ENCODE measurements at regions of chr13 and their contacts with region 1.

Region 1: GRCh38 chr13:77480066-77480465 is 55.4 kb upstream of the SCEL start:
- DNase-seq: no peak
- ATAC-seq: no peak
- H3K4me3 ChIP-seq: no peak overlapping the region
- H3K27ac ChIP-seq: no peak overlapping the region
- H3K4me1 ChIP-seq: peaks cover 0 to 7% of the 10 kb centered on the region in 2 experiments; a peak in 2 of 4 replicates
- H3K27me3 ChIP-seq: no peaks in the 10 kb centered on the region
- CTCF ChIP-seq: no peak
- POLR2A ChIP-seq: no peak
- RAD21 ChIP-seq: no peak

Region 2: GRCh38 chr13:77026818-77027585 is 453.1 kb before region 1 on chr13 and contains the start of gene FBXL3:
- CTCF ChIA-PET with region 1: no interaction called
- POLR2A ChIA-PET with region 1: no interaction called
- RAD21 ChIA-PET with region 1: no interaction called
- intact Hi-C with region 1: loop called (anchors 10 kb)
- DNase-seq: peak; percentile 46
- ATAC-seq: peak; percentile 77
- H3K4me3 ChIP-seq: peak within 1 kb of the TSS; percentile 63 to 84
- H3K27ac ChIP-seq: peak within 1 kb of the TSS; percentile 94
- H3K4me1 ChIP-seq: peaks cover 9 to 25% of the 10 kb centered on the region in 2 experiments; a peak in 3 of 4 replicates
- H3K27me3 ChIP-seq: no peaks in the 10 kb centered on the region
- CTCF ChIP-seq: no peak
- POLR2A ChIP-seq: peak; percentile 13
- RAD21 ChIP-seq: no peak
- total RNA-seq, gene FBXL3: 24.0 TPM

Region 3: DNA sequence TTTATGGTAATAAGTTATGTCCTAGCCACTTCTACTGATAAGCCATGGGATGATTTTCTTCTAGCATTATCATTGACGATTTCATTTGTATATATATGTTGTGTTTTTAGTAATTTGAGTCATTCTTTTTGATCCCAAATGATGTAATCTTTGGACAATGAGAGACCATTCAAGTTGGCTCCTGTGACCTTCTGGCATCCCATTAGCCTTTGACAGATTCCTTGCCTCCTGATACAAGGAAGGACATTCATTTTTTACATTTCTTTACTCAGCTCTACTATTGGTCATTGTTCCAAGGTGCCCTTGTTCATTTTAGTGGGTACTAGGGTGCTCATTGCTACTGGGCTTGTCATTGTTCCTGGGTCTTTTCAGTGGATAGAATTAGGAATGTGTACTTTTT is 117.9 kb before region 1 on chr13:
- CTCF ChIA-PET with region 1: no interaction called
- POLR2A ChIA-PET with region 1: no interaction called
- RAD21 ChIA-PET with region 1: no interaction called
- intact Hi-C with region 1: no loop called
- DNase-seq: no peak
- ATAC-seq: no peak
- H3K4me3 ChIP-seq: no peak overlapping the region
- H3K27ac ChIP-seq: no peak overlapping the region
- H3K4me1 ChIP-seq: no peaks in the 10 kb centered on the region
- H3K27me3 ChIP-seq: peaks cover 4% of the 10 kb centered on the region; the same call in 1 of the 2 replicates
- CTCF ChIP-seq: no peak
- POLR2A ChIP-seq: no peak
- RAD21 ChIP-seq: no peak

Measured in HCT116 (cell line).